ENCODE measurements at regions of chr1 and their contacts with region 1.

Region 1: GRCh38 chr1:3483801-3484444 is 29.5 kb downstream of the ARHGEF16 start:
- DNase-seq: peak; percentile 67
- ATAC-seq: peak; percentile 63
- H3K4me3 Mint-ChIP-seq: no peak overlapping the region
- H3K27ac Mint-ChIP-seq: no peak overlapping the region
- H3K4me1 Mint-ChIP-seq: no peaks in the 10 kb centered on the region
- H3K27me3 Mint-ChIP-seq: no peaks in the 10 kb centered on the region

Region 2: GRCh38 chr1:3453203-3453761 is 30.6 kb before region 1 on chr1:
- CTCF ChIA-PET with region 1: interaction called, 18 read pairs
- POLR2A ChIA-PET with region 1: no interaction called
- intact Hi-C with region 1: loop called (anchors 1 kb)
- DNase-seq: peak; percentile 87
- ATAC-seq: peak; percentile 89
- H3K4me3 Mint-ChIP-seq: no peak overlapping the region
- H3K27ac Mint-ChIP-seq: no peak overlapping the region
- H3K4me1 Mint-ChIP-seq: peaks cover 3% of the 10 kb centered on the region
- H3K27me3 Mint-ChIP-seq: peaks cover 2% of the 10 kb centered on the region

Measured in activated CD4-positive, alpha-beta T cell treated with anti-CD3 and anti-CD28 coated beads for 36 hours (primary cell).